K562 (cell line): ENCODE measurements at regions of chr10 and their contacts with region 1.

Region 1: GRCh38 chr10:34637418-34637911 is 177.6 kb downstream of the PARD3 start:
- DNase-seq: peak; percentile 40 to 68 (median 56)
- ATAC-seq: peak; percentile 85
- H3K4me3 ChIP-seq: no peak overlapping the region
- H3K27ac ChIP-seq: no peak overlapping the region
- H3K4me1 ChIP-seq: no peaks in the 10 kb centered on the region
- H3K27me3 ChIP-seq: no peaks in the 10 kb centered on the region
- CTCF ChIP-seq: peak; percentile 75 to 94 (median 78)
- EP300 ChIP-seq: no peak
- POLR2A ChIP-seq: no peak
- RAD21 ChIP-seq: peak; percentile 55 to 72

Region 2: GRCh38 chr10:33193057-33193700 is 1444.3 kb before region 1 on chr10:
- CTCF ChIA-PET with region 1: interaction called, 3 read pairs
- POLR2A ChIA-PET with region 1: no interaction called
- in situ Hi-C with region 1: no loop called
- intact Hi-C with region 1: loop called (anchors 10 kb)
- DNase-seq: peak; percentile 55 to 66 (median 56)
- ATAC-seq: peak; percentile 96
- H3K4me3 ChIP-seq: no peak overlapping the region
- H3K27ac ChIP-seq: no peak overlapping the region
- H3K4me1 ChIP-seq: no peaks in the 10 kb centered on the region
- H3K27me3 ChIP-seq: peaks cover 5 to 8% of the 10 kb centered on the region in 2 experiments; a peak in 2 of 5 replicates
- CTCF ChIP-seq: peak; percentile 61 to 62 (median 61)
- EP300 ChIP-seq: no peak
- POLR2A ChIP-seq: no peak
- RAD21 ChIP-seq: peak; percentile 57 to 64

Region 3: GRCh38 chr10:33330543-33331378 is 1306.7 kb before region 1 on chr10:
- CTCF ChIA-PET with region 1: interaction called, 12 read pairs
- POLR2A ChIA-PET with region 1: no interaction called
- in situ Hi-C with region 1: loop called (anchors 10 kb)
- intact Hi-C with region 1: loop called (anchors 2 kb)
- DNase-seq: peak; percentile 65 to 73 (median 70)
- ATAC-seq: peak; percentile 92
- H3K4me3 ChIP-seq: no peak overlapping the region
- H3K27ac ChIP-seq: no peak overlapping the region
- H3K4me1 ChIP-seq: peaks cover 0 to 11% of the 10 kb centered on the region in 2 experiments; a peak in 2 of 5 replicates
- H3K27me3 ChIP-seq: peaks cover 3 to 19% of the 10 kb centered on the region in 2 experiments; a peak in 3 of 5 replicates
- CTCF ChIP-seq: peak; percentile 65 to 85 (median 83)
- EP300 ChIP-seq: no peak
- POLR2A ChIP-seq: no peak
- RAD21 ChIP-seq: peak; percentile 72 to 77

Region 4: GRCh38 chr10:33832124-33832787 is 805.2 kb before region 1 on chr10:
- CTCF ChIA-PET with region 1: no interaction called
- POLR2A ChIA-PET with region 1: no interaction called
- in situ Hi-C with region 1: loop called (anchors 25 kb)
- intact Hi-C with region 1: no loop called
- DNase-seq: no peak
- ATAC-seq: no peak
- H3K4me3 ChIP-seq: no peak overlapping the region
- H3K27ac ChIP-seq: no peak overlapping the region
- H3K4me1 ChIP-seq: no peaks in the 10 kb centered on the region
- H3K27me3 ChIP-seq: no peaks in the 10 kb centered on the region; a peak in 1 of 5 replicates
- CTCF ChIP-seq: no peak
- EP300 ChIP-seq: no peak
- POLR2A ChIP-seq: no peak
- RAD21 ChIP-seq: no peak

Region 5: GRCh38 chr10:34522546-34522945 is 114.9 kb before region 1 on chr10:
- CTCF ChIA-PET with region 1: interaction called, 6 read pairs
- POLR2A ChIA-PET with region 1: no interaction called
- in situ Hi-C with region 1: no loop called
- intact Hi-C with region 1: loop called (anchors 1 kb)
- DNase-seq: peak in 2 of 4 experiments; percentile 16 to 31
- ATAC-seq: peak; percentile 69
- H3K4me3 ChIP-seq: no peak overlapping the region
- H3K27ac ChIP-seq: no peak overlapping the region
- H3K4me1 ChIP-seq: no peaks in the 10 kb centered on the region
- H3K27me3 ChIP-seq: no peaks in the 10 kb centered on the region
- CTCF ChIP-seq: peak; percentile 38 to 65 (median 45); a peak in 5 of 6 replicates
- EP300 ChIP-seq: no peak
- POLR2A ChIP-seq: no peak
- RAD21 ChIP-seq: peak; percentile 44 to 46